PC-3 (cell line): ENCODE measurements at regions of chr7 and their contacts with region 1.

Region 1: GRCh38 chr7:29921404-29922010 is 68.1 kb downstream of the SCRN1 start:
- DNase-seq: peak; percentile 73
- ATAC-seq: peak; percentile 96
- H3K4me3 ChIP-seq: no peak overlapping the region
- H3K27ac ChIP-seq: no peak overlapping the region
- H3K4me1 ChIP-seq: no peaks in the 10 kb centered on the region
- H3K27me3 ChIP-seq: no peaks in the 10 kb centered on the region
- CTCF ChIP-seq: peak; percentile 95

Region 2: DNA sequence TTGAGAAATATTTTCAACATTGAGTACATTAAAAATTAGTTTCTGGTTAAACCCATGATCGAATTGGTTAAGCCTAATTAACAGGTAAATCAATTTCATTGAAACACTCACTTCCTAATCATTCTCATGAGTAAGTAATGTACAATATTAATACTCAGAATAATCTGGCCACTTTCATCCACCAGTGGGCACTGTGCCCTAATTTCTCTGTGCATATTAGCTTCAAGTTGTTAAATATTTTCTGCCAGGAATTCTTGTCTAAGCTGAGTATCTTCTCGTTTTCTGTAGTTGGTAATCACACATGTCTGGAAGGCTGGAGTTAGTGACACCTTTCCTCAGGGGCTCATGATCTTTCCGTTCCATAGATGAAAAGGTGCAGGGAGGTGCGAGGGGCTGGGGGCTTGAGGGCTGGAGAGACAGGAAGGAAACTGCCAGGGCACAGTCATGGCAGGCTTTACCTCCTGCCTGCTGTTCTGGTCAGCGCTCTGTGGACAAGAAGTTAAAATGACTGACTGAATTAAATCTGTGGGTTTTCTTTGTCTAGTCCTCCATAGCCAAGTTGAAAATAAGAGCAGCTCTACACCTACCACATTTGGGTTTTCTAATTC is 43.3 kb before region 1 on chr7:
- CTCF ChIA-PET with region 1: interaction called, 9 read pairs
- POLR2A ChIA-PET with region 1: no interaction called
- intact Hi-C with region 1: loop called (anchors 1 kb)
- DNase-seq: peak; percentile 76
- ATAC-seq: peak; percentile 74
- H3K4me3 ChIP-seq: no peak overlapping the region
- H3K27ac ChIP-seq: no peak overlapping the region
- H3K4me1 ChIP-seq: peaks cover under 1% of the 10 kb centered on the region
- H3K27me3 ChIP-seq: no peaks in the 10 kb centered on the region
- CTCF ChIP-seq: peak; percentile 83

Region 3: DNA sequence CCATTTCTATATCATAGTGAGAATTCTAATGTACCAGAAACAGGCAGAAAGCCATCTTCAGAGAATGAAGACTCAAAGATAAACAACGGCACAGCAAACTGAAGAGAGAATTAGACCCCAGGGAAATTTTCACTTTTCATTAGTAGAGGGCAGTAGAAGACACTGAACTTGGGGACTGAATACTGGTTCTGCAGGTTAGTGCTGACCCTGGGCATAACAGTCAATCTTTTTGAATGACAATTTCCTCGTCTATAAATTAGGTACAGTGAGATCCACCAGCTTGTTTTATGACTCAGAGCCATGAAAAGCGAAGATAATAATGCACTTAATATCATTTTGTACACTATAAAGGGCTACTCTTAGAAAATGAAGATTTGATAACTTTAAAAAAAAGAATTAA is 91.2 kb after region 1 on chr7:
- CTCF ChIA-PET with region 1: no interaction called
- POLR2A ChIA-PET with region 1: no interaction called
- intact Hi-C with region 1: no loop called
- DNase-seq: peak; percentile 72
- ATAC-seq: peak; percentile 63
- H3K4me3 ChIP-seq: no peak overlapping the region
- H3K27ac ChIP-seq: no peak overlapping the region
- H3K4me1 ChIP-seq: peaks cover 6% of the 10 kb centered on the region; the same call in 1 of the 2 replicates
- H3K27me3 ChIP-seq: no peaks in the 10 kb centered on the region
- CTCF ChIP-seq: peak; percentile 45; the same call in 1 of the 2 replicates